K562 (cell line): ENCODE measurements at regions of chr11 and their contacts with region 1.

Region 1: DNA sequence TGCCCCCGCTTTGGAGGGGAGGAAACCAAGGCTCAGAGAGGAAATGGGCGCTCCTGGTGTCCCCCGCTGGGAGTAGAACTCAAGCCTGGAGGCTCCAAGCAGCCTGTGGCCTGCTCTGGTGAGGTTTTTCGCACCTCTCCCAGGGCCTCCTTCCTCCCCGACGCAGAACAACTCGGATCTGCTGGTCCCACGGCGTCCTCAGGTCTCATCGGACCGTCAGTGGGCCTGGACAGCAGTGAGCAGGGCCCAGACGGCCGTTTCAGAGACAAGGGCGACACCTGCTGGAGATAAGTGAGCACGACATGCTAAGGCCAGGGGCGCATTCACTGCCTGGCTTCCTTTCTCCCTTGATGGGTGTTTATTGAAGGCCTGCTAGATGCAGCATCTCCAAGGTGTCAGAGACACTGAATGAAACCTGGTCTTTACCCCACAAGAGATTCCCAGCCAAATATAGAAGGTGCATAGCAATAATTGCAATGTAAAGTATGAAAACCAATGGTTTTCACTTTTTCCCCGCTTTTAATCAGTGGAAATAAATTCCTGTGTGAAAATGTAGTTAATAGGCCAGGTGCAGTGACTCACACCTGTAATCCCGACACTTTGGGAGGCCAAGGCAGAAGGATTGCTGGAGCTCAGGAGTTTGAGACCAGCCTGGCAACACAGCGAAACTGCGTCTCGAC is 26.9 kb upstream of the CD82 start:
- DNase-seq: peak; percentile 85 to 88 (median 87)
- ATAC-seq: peak; percentile 95
- H3K4me3 ChIP-seq: no peak overlapping the region
- H3K27ac ChIP-seq: no peak overlapping the region
- H3K4me1 ChIP-seq: peaks cover 16 to 29% of the 10 kb centered on the region in 2 experiments
- H3K27me3 ChIP-seq: no peaks in the 10 kb centered on the region
- CTCF ChIP-seq: peak; percentile 92 to 95 (median 95)
- EP300 ChIP-seq: no peak
- POLR2A ChIP-seq: no peak
- RAD21 ChIP-seq: peak; percentile 99

Region 2: GRCh38 chr11:44110231-44110679 is 428.3 kb before region 1 on chr11:
- CTCF ChIA-PET with region 1: no interaction called
- POLR2A ChIA-PET with region 1: no interaction called
- in situ Hi-C with region 1: no loop called
- intact Hi-C with region 1: loop called (anchors 5 kb)
- DNase-seq: peak; percentile 60 to 75 (median 66)
- ATAC-seq: peak; percentile 100
- H3K4me3 ChIP-seq: no peak overlapping the region
- H3K27ac ChIP-seq: no peak overlapping the region
- H3K4me1 ChIP-seq: no peaks in the 10 kb centered on the region
- H3K27me3 ChIP-seq: no peaks in the 10 kb centered on the region
- CTCF ChIP-seq: peak; percentile 78 to 93 (median 84)
- EP300 ChIP-seq: no peak
- POLR2A ChIP-seq: no peak
- RAD21 ChIP-seq: peak; percentile 72 to 75

Region 3: GRCh38 chr11:44445500-44446365 is 92.8 kb before region 1 on chr11:
- CTCF ChIA-PET with region 1: no interaction called
- POLR2A ChIA-PET with region 1: no interaction called
- in situ Hi-C with region 1: no loop called
- intact Hi-C with region 1: no loop called
- DNase-seq: peak in 1 of 4 experiments; percentile 16
- ATAC-seq: peak; percentile 76
- H3K4me3 ChIP-seq: no peak overlapping the region
- H3K27ac ChIP-seq: no peak overlapping the region
- H3K4me1 ChIP-seq: peaks cover 2 to 3% of the 10 kb centered on the region in 2 experiments; a peak in 3 of 5 replicates
- H3K27me3 ChIP-seq: peaks cover 4 to 23% of the 10 kb centered on the region in 2 experiments; a peak in 2 of 5 replicates
- CTCF ChIP-seq: no peak
- EP300 ChIP-seq: no peak
- POLR2A ChIP-seq: no peak
- RAD21 ChIP-seq: no peak

Region 4: DNA sequence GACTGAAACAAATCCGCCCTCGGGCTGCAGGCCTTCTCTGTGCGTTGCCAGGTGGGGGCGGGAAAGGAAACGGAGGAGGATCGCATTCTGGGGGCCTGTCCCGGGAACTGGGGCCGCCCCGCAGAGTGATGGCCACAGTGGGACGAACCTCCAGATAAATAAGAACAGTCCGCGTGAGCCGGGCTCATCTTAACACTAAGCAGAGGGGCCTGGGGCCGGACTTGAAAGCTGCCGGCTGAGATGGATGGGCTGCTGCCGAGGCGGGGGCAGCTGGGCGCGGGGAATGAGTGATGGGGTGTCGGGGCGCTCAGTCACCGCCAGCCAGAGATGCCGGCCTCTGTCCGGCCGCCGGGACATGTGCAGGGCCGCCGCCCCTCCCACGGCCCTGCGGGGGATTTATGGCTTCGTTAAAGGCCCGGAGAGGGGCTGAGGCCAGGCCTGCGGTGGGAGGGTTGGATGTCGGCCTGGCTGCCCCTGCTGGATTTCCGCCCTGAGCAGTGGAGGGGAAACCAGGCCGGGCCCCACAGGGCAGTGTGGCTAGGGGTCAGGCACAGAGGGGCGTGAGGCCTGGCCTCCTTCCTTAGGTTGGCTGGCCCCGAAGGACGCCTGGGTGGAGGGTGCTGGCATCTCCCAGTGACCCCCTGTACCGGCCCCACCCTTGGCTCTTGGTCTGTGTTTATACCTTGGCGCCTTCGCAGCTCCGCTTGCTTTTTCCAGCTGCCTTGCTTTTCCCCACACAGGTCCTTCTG is 18.4 kb before region 1 on chr11:
- CTCF ChIA-PET with region 1: interaction called, 23 read pairs
- POLR2A ChIA-PET with region 1: interaction called, 5 read pairs
- in situ Hi-C with region 1: no loop called
- intact Hi-C with region 1: loop called (anchors 1 kb)
- DNase-seq: no peak
- ATAC-seq: no peak
- H3K4me3 ChIP-seq: no peak overlapping the region
- H3K27ac ChIP-seq: no peak overlapping the region
- H3K4me1 ChIP-seq: peaks cover 16 to 20% of the 10 kb centered on the region in 2 experiments
- H3K27me3 ChIP-seq: no peaks in the 10 kb centered on the region
- CTCF ChIP-seq: no peak
- EP300 ChIP-seq: no peak
- POLR2A ChIP-seq: no peak
- RAD21 ChIP-seq: no peak